ENCODE measurements at regions of chr12 and their contacts with region 1.

Region 1: DNA sequence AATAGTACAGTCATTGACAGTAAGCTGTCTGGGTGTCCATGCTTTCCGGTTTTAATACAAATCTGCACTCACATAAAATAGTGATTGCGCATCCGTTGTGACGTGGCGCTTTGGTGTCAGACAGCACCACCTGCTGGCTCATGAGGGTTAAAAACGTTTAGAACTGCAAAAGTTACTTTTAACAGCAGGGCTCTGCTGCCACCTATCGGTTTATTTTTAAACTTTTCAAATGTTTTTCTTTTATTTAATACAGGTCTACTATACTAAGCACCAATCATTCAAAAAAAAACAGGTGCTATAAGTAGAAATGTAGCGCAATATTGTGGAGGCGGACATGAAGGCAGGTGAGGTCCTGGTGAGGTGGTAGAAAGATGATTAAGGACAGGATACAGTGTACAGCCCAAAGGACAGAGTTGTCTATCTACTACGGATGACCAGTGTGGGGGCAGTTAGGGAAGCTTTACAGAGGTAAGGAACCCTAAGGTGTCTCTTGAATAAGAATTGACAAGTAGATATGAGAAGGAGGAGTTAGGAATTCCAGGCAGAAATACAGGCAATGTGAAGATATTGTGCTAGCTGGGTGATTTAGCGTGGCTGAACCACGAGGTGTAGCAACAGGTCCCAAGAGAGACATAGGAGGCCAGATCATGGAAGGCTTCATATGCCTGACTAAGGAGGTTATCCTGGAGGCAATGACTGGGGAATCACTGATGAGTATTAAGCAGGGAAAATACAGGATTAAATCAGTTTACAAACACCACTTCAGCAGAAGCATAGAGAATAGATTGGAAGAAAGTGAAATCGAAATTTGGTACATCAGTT is 91.5 kb upstream of the PRB2 start:
- DNase-seq: peak; percentile 79
- CTCF ChIP-seq: peak; percentile 97

Region 2: DNA sequence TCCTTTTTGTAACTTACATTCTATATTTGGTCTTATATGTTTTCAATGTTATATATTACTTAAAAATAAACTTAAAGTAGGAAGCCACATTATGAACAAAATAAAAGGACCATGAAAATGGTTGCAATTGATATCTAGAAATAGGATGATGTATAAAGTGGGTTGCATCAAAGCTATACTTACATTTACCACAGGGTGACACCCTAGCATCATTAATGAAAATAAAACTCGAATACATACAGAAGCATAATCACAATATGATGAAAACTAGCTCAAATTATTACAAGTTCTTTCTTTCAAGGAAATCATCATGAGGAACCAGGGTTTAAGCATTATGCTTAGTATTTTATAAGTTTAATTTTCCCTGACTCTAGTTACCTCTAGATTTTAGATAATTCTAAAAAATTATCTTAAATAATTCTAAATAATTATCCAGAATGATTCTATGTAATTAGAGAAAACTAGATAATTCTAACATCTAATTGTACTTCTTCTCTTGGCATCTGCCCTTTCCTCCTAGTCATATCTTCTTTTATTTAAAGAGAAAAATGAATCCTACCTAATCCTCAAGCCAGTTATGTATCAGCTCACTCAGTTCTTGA is 715.6 kb before region 1 on chr12:
- CTCF ChIA-PET with region 1: interaction called, 51 read pairs
- POLR2A ChIA-PET with region 1: no interaction called
- DNase-seq: no peak
- CTCF ChIP-seq: peak; percentile 57

Region 3: DNA sequence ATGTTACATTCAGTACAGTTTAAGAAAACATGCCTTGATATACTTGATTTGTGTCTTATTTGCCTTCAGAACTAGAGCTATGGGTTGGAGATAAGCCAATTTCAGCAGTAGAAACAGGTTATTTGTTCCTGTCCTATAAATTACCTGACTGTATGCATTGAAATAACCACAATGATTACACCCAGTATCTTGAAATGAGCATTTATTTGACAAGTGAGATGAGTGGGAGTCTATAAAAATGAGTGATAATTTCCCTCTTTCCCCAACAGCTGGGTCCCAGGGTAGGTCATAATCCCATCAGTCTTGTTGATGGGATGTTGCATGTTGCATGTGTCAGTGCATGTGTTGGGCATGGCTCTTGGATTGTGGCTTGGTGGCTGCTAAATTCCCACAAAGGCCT is 303.8 kb before region 1 on chr12:
- CTCF ChIA-PET with region 1: no interaction called
- POLR2A ChIA-PET with region 1: no interaction called
- DNase-seq: no peak
- CTCF ChIP-seq: no peak

Region 4: GRCh38 chr12:11202811-11203210 is 284.0 kb before region 1 on chr12:
- CTCF ChIA-PET with region 1: interaction called, 10 read pairs
- POLR2A ChIA-PET with region 1: no interaction called
- DNase-seq: no peak
- CTCF ChIP-seq: no peak

Region 5: DNA sequence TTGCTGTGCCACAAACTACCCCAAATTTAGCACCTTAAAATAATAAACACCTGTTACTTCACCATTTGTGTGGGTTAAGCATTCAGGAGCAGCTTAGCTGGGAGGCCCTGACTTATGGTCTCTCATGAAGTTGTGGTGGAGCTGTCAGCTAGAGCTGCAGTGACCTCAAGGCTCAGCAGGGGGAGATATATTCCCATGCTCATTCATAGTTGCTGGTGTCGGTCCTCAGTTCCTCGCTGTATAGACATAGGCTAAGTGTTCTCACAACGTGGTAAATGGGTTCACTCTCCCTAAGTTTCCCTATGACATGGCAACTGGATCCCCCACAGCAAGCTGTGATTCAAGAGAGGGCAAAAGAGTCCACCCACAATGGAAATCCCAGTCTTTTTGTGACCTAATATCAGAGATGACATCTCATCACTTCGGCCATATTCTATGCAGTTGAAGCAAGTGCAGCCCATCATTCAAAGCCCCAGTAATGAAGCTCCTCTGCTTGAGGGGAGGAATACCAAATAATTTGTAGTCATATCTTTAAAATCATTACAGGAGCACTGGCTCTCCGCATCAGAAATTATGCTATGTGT is 258.4 kb before region 1 on chr12:
- CTCF ChIA-PET with region 1: interaction called, 62 read pairs
- POLR2A ChIA-PET with region 1: no interaction called
- DNase-seq: peak; percentile 24
- CTCF ChIP-seq: peak; percentile 72

Region 6: DNA sequence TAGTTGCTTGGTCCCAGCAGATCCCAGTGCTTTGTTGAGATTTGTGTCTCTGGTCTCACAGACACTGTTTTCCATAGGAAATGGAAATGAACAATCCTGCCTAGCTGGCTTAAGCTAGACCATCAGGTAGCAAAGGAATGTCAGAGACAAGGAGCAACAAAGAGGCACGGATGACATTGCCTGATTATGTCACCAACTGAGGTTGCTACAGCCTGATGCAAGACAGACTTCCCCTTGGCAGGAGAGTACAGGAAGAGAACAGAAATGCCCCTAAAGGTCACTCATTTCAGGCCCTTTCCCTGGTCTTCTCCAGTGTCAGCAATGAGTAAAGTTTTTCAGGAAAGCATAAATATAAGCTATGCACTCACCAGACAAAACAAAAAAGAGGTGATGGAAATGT is 89.5 kb before region 1 on chr12:
- CTCF ChIA-PET with region 1: no interaction called
- POLR2A ChIA-PET with region 1: no interaction called
- DNase-seq: no peak
- CTCF ChIP-seq: no peak

Measured in GM10248 (cell line).